ENCODE measurements at regions of chr14 and their contacts with region 1.

Region 1: DNA sequence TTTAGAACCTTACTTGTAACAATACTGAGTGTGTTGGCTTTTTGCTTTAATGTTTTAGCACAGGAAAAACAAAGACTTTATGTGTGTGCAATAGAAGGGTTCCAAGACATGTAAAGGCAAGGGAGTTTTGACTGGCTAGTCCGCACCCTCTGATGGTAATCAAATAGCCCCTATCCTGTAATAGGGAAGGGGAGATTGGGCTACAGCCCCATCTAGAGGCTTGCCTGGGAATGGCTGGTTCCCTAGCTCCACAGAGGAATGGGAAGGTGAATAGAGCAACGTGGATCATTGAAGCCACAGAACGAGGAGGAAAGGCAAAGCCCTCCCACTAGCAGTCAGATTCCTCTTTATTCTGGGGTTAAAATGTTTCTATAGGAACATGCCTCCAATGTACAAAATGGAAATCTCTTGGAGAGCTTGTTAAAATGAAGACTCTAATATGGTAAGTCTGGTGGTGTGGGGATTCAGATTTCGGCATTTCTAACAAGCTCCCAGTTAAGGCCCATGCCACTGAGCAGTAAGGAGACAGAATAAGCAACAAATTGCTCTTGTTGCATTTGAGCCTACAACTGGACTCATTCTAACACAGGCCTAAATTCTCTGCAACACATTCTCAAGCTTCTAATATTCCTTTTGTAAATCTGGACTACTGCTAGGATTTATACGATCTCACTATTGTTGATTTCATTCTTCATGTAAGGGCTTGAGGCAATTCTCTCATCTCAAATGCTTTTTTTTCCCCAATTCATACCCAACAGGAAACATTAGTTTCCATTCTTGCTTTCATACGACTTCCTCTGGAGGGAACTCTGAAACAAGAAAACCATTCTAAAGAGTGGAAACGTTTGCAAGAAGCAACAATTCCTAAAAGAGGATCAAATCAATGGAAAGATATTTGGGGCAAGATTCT is 57.1 kb downstream of the NIN start:
- DNase-seq: no peak
- H3K4me3 ChIP-seq: no peak overlapping the region
- H3K4me3 Mint-ChIP-seq: peak overlapping the region in 1 of 8 donors; percentile 33
- H3K27ac ChIP-seq: no peak overlapping the region
- H3K27ac Mint-ChIP-seq: peak overlapping the region in 6 of 7 donors; percentile 25 to 87 (median 59)
- H3K4me1 ChIP-seq: peaks cover 13% of the 10 kb centered on the region
- H3K4me1 Mint-ChIP-seq: peaks cover 15 to 31% (median 20%) of the 10 kb centered on the region in 4 donors
- H3K27me3 ChIP-seq: no peaks in the 10 kb centered on the region
- H3K27me3 Mint-ChIP-seq: no peaks in the 10 kb centered on the region

Region 2: GRCh38 chr14:50599700-50600444 is 174.0 kb before region 1 on chr14:
- CTCF ChIA-PET with region 1: interaction called, 30 read pairs
- POLR2A ChIA-PET with region 1: no interaction called
- intact Hi-C with region 1: loop called (anchors 1 kb)
- DNase-seq: peak in 4 of 5 donors; percentile 1 to 14 (median 8)
- H3K4me3 ChIP-seq: no peak overlapping the region
- H3K4me3 Mint-ChIP-seq: no peak overlapping the region
- H3K27ac ChIP-seq: no peak overlapping the region
- H3K27ac Mint-ChIP-seq: no peak overlapping the region
- H3K4me1 ChIP-seq: no peaks in the 10 kb centered on the region
- H3K4me1 Mint-ChIP-seq: no peaks in the 10 kb centered on the region
- H3K27me3 ChIP-seq: no peaks in the 10 kb centered on the region
- H3K27me3 Mint-ChIP-seq: peaks cover 0 to 1% of the 10 kb centered on the region in 2 donors

Region 3: DNA sequence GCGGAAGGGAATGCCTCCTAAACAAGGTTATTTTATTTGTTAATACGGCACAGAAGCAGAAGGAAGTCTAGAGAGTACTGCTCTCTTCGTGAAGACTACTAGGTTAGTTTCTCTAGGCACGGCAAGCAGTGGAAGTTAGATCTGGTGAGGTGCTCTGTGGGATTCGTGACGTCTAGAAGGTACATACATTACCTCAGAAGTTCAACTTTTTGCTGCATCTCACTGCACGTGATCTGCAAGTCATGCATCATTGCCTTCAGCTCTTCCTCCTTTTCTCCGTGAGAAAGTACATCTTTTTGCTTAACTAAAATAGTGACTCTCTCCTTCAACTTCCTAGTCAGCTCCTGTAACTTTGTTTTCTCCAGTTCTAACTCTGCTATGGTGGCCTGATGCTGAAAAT is 17.6 kb before region 1 on chr14:
- CTCF ChIA-PET with region 1: interaction called, 66 read pairs
- POLR2A ChIA-PET with region 1: no interaction called
- intact Hi-C with region 1: no loop called
- DNase-seq: no peak
- H3K4me3 ChIP-seq: no peak overlapping the region
- H3K4me3 Mint-ChIP-seq: no peak overlapping the region
- H3K27ac ChIP-seq: no peak overlapping the region
- H3K27ac Mint-ChIP-seq: no peak overlapping the region
- H3K4me1 ChIP-seq: no peaks in the 10 kb centered on the region
- H3K4me1 Mint-ChIP-seq: no peaks in the 10 kb centered on the region
- H3K27me3 ChIP-seq: no peaks in the 10 kb centered on the region
- H3K27me3 Mint-ChIP-seq: no peaks in the 10 kb centered on the region

Region 4: DNA sequence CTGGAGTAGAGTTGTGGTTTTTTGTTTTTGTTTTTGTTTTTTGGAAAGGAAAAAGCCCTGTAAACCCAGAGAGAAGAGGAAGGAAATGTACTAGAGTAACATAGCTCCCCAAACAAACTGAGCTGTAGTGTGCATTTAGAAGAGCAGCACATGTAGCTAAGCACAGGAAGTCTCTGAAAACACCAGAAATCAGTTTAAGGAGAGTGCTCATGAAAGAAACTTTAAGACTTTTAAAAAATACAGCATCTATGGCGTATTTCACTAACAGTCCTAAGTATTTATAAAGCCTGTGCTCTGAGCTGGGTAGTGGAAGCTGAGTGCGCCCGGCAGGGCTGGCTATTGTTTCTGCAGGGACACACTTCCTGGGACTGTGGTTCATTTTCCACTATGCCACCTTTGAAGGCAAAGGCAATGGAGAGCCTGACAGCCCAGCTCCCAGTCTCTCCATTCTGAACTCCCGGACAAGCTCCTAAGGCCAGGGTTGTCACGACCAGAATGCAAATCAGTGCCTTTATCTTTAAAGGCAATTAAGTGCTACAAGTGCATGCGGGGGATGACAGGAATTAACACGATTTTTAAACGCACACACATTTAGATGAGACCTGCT is 11.7 kb after region 1 on chr14:
- CTCF ChIA-PET with region 1: interaction called, 132 read pairs
- POLR2A ChIA-PET with region 1: interaction called, 7 read pairs
- intact Hi-C with region 1: no loop called
- DNase-seq: peak in 1 of 5 donors; percentile 22
- H3K4me3 ChIP-seq: no peak overlapping the region
- H3K4me3 Mint-ChIP-seq: peak overlapping the region; percentile 56 to 91 (median 74)
- H3K27ac ChIP-seq: peak overlapping the region; percentile 46
- H3K27ac Mint-ChIP-seq: peak overlapping the region; percentile 82 to 96 (median 88)
- H3K4me1 ChIP-seq: peaks cover 69% of the 10 kb centered on the region
- H3K4me1 Mint-ChIP-seq: peaks cover 52 to 89% (median 72%) of the 10 kb centered on the region in 4 donors
- H3K27me3 ChIP-seq: no peaks in the 10 kb centered on the region
- H3K27me3 Mint-ChIP-seq: no peaks in the 10 kb centered on the region

Measured in CD4-positive, alpha-beta memory T cell (primary cell).